Activated CD4-positive, alpha-beta T cell treated with anti-CD3 and anti-CD28 coated beads, Interleukin-2, amount 10 ng/mL, durations not matched to agents 24 days and 14 days (primary cell): ENCODE measurements at regions of chr17 and their contacts with region 1.

Region 1: GRCh38 chr17:59440784-59441441 is 109.5 kb downstream of the YPEL2 start:
- DNase-seq: peak; percentile 96
- H3K4me3 Mint-ChIP-seq: peak overlapping the region; percentile 78
- H3K27ac Mint-ChIP-seq: peak overlapping the region; percentile 95
- H3K4me1 Mint-ChIP-seq: peaks cover 49% of the 10 kb centered on the region
- H3K27me3 Mint-ChIP-seq: no peaks in the 10 kb centered on the region

Region 2: GRCh38 chr17:59220376-59221158 is 220.3 kb before region 1 on chr17 and contains the start of gene GDPD1:
- intact Hi-C with region 1: loop called (anchors 5 kb)
- DNase-seq: peak; percentile 99
- H3K4me3 Mint-ChIP-seq: peak within 1 kb of the TSS; percentile 97
- H3K27ac Mint-ChIP-seq: peak within 1 kb of the TSS; percentile 97
- H3K4me1 Mint-ChIP-seq: peaks cover 14% of the 10 kb centered on the region
- H3K27me3 Mint-ChIP-seq: peaks cover 4% of the 10 kb centered on the region
- total RNA-seq, gene GDPD1: 1.8 and 2.7 TPM in 2 replicates

Region 3: DNA sequence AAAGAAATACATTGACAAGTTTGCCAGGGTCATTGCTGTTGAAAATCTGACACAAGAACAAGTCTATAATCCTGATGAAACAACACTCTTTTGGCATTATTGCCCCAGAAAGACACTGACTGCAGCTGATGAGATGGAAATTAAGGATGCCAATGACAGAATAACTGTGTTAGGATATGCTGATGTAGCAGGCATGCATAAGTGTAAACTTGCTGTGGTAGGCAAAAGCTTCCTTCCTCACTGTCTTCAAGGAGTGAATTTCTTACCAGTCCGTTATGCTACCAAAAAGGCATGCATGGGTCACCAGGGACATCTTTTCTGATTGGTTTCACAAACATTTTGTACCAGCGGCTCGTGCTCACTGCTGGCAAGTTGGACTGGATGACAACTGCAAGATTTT is 210.1 kb before region 1 on chr17:
- intact Hi-C with region 1: no loop called
- DNase-seq: no peak
- H3K4me3 Mint-ChIP-seq: no peak overlapping the region
- H3K27ac Mint-ChIP-seq: no peak overlapping the region
- H3K4me1 Mint-ChIP-seq: peaks cover 4% of the 10 kb centered on the region
- H3K27me3 Mint-ChIP-seq: no peaks in the 10 kb centered on the region

Region 4: DNA sequence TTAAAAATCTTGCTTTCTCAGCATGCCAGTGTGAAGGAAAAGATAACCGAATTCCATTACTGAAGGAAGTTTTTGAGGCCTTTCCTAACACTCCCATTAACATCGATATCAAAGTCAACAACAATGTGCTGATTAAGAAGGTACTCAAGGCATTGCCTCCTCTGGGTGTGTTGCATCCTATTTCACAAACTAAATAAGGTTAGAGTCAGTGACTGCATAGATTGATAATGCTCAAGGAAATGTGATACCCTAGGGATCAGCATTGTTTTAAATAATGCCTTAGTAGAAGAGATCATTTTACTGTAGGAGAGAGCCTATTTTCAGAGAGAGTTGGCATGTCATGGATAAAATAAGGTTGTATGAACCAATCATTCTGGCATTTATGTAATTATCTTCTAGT is 183.8 kb before region 1 on chr17:
- intact Hi-C with region 1: no loop called
- DNase-seq: no peak
- H3K4me3 Mint-ChIP-seq: no peak overlapping the region
- H3K27ac Mint-ChIP-seq: no peak overlapping the region
- H3K4me1 Mint-ChIP-seq: peaks cover 2% of the 10 kb centered on the region
- H3K27me3 Mint-ChIP-seq: no peaks in the 10 kb centered on the region

Region 5: DNA sequence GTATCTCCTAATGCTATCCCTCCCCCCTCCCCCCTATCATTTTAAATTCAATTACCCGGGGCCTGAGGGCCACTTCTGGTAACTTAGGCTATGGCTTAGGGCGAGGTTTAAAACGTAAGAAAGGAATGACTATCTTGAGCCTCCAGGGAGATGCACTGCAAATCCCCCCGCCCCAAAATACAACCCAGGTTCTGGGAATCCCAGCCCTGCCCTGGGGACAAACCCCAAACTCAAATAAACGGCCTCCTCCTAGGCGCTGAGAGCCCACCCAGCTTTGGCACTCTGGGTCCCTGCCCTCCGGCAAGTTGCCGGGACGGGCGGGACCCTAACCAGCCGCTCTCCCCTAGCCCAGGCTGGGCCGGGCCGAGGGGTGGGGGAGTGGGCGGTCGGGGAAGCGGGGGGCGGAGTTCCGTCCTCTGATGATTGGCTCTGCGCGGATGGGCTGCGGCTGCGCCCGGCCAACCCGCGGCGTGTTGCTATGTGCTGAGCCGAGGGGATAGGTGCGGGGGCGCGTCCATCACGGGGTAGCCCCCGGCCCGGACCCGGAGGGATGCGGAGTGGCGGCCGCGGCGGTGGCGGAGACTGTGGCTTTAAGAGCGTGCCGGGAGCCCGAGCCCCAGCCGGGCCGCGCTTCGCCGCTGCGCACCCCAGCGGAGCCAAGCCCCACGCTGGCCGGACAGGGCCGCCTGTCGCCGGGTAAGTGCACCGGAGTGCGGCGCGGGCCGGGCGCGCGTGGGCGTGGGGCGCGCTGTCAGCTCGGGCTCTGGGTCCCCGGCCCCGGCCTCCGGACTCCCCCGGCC is 109.6 kb before region 1 on chr17 and contains the start of gene YPEL2:
- intact Hi-C with region 1: loop called (anchors 1 kb)
- DNase-seq: peak; percentile 97
- H3K4me3 Mint-ChIP-seq: peak within 1 kb of the TSS; percentile 89
- H3K27ac Mint-ChIP-seq: peak within 1 kb of the TSS; percentile 79
- H3K4me1 Mint-ChIP-seq: peaks cover 57% of the 10 kb centered on the region
- H3K27me3 Mint-ChIP-seq: peaks cover 15% of the 10 kb centered on the region
- total RNA-seq, gene YPEL2: 6.2 and 7.0 TPM in 2 replicates

Region 6: DNA sequence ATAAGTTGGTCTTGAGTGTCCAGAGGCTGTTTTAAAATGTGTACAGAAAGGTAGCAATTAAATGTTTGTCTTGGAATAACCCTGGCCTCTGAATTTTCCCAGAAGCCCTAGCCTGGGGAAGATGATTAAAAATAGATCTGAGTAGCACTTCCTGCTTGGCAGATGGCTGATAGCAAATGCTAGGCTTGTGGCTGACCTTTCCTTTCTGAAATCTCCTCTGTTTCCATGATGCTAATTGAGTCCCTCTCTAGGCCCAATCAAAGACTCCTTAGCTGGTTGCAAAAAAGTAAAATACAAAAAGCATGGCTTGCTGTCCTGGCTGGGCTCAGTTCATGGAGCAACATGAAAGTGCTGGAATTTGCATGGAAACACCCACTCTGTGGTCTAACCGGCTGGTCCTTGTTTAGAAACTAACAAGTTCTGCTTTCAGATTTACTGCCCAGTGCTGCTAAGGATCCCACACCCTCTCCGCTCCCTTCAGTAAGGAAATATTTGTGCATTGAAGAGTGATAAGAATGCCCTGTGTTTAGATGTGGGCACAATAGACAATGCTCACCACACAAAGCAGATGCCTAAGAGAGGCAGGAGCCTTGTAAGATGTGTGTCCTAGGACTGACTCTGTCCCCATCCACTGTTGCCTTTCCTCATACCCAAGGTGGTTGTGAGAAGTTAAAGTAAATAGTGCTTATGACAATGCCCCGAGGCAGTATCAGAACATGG is 68.6 kb before region 1 on chr17:
- intact Hi-C with region 1: loop called (anchors 2 kb)
- DNase-seq: no peak
- H3K4me3 Mint-ChIP-seq: peak overlapping the region; percentile 55
- H3K27ac Mint-ChIP-seq: peak overlapping the region; percentile 87
- H3K4me1 Mint-ChIP-seq: peaks cover 62% of the 10 kb centered on the region
- H3K27me3 Mint-ChIP-seq: no peaks in the 10 kb centered on the region